ENCODE measurements at regions of chr19 and their contacts with region 1.

Region 1: DNA sequence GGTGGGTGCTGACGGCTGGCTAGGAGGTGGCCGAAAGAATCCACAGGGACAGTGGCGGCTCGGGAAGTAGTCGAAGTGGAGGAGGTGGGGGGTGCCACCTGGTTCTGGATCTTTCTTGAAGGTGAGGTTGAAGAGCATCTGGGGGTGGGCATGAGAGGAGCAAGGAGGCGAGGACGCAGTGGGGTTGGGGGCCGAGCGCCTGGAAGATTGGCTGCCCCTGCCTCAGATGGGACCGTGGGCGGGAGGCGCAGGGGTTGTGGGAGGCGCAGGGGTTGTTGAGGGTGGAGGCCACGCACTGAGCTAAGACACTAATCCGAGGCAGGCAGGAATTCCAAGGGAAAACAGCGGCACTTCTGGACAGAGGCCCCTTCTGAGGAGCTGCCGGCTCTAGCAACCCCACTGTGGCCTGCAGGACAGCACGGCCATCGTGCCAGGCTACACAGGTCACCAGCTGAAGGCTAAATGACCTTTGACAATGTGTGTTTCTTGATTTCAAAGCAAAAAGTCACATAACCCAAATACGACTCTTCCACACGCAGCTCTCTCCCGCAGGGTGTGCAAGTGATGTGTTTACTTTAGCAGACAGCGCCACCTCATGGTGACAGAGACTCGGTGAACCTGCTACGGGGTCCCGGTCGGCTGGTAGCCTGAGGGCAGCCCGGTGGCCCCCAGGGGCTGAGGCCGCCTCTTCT is 44.1 kb upstream of the RANBP3 start:
- DNase-seq: peak; percentile 87
- ATAC-seq: peak; percentile 93
- H3K4me3 Mint-ChIP-seq: no peak overlapping the region
- H3K27ac Mint-ChIP-seq: no peak overlapping the region
- H3K4me1 Mint-ChIP-seq: peaks cover 14% of the 10 kb centered on the region
- H3K27me3 Mint-ChIP-seq: no peaks in the 10 kb centered on the region

Region 2: DNA sequence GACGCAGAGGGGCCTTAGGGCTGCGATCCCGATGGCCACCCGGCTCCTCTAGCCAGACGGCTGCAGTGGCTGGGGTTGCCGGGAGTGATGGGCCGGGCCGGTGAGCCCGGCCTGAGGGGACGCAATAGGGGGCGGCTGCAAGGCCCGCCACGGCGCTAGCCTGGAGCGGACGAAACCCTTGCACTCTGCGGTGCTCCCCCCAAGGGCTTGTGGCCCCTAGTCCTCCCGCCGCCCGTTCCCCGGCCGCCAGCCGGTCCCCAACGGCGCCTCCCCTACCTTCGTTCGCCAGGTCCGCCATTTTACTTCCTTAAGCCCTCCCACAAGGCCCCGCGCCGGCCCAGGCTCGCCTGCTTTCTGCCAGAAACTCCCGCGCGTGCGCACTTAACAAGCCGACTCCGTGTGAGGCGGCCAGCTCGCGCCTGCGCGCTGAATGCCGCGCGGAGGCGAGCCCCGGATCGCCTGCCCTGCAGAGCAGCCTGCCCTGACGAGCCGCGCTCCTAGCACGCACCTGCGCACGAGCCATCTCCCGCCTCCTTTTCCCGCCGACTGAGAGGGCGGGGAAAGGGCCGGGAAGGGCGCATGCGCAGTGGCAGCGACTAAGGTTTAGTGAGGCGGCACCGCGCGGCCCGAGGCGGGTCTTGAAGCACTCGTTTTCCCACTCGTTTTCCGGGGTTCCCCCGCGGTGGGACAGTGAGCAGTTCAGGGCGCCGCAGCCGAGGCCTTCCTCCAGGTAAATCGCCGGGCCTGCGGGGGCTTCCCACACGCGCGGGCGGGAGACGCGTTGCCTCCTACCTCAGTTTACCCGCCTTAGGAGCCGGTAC is 44.0 kb before region 1 on chr19 and contains the start of gene RANBP3:
- CTCF ChIA-PET with region 1: interaction called, 33 read pairs
- POLR2A ChIA-PET with region 1: no interaction called
- DNase-seq: peak; percentile 99
- ATAC-seq: peak; percentile 98
- H3K4me3 Mint-ChIP-seq: peak within 1 kb of the TSS; percentile 99
- H3K27ac Mint-ChIP-seq: peak within 1 kb of the TSS; percentile 95
- H3K4me1 Mint-ChIP-seq: peaks cover 60% of the 10 kb centered on the region
- H3K27me3 Mint-ChIP-seq: no peaks in the 10 kb centered on the region
- total RNA-seq, gene RANBP3: 82.2 to 93.6 TPM

Region 3: GRCh38 chr19:5987077-5987818 is 34.8 kb before region 1 on chr19:
- CTCF ChIA-PET with region 1: interaction called, 47 read pairs
- POLR2A ChIA-PET with region 1: no interaction called
- DNase-seq: peak; percentile 83
- ATAC-seq: peak; percentile 57
- H3K4me3 Mint-ChIP-seq: peak overlapping the region; percentile 67
- H3K27ac Mint-ChIP-seq: peak overlapping the region; percentile 66
- H3K4me1 Mint-ChIP-seq: peaks cover 48% of the 10 kb centered on the region
- H3K27me3 Mint-ChIP-seq: no peaks in the 10 kb centered on the region

Region 4: DNA sequence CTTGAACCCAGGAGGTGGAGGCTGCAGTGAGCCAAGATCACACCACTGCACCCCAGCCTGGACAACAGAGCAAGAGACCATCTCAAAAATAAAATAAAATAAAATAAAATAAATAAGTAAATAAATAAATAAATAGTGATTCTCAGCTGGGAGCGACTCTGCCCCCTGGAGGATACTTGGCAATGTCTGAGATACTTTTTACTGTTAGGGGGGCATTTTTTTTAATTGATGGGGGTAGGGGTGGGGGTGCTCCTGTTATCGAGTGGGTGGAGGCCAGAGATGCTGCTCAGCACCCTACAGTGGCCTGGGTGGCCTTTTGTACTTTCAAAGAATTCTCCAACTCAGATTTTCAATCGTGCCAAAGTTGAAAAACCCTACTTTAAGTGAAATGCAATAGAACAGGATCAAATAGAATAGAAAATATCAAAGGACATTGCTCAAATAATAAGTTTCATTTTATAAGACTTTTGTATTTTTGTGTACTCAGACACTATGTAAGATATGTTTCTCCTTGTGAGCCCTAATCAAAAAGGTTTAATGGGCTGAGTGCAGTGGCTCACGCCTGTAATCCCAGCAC is 332.2 kb after region 1 on chr19:
- CTCF ChIA-PET with region 1: no interaction called
- POLR2A ChIA-PET with region 1: no interaction called
- DNase-seq: no peak
- ATAC-seq: no peak
- H3K4me3 Mint-ChIP-seq: no peak overlapping the region
- H3K27ac Mint-ChIP-seq: no peak overlapping the region
- H3K4me1 Mint-ChIP-seq: no peaks in the 10 kb centered on the region
- H3K27me3 Mint-ChIP-seq: no peaks in the 10 kb centered on the region

Measured in activated CD8-positive, alpha-beta T cell treated with anti-CD3 and anti-CD28 coated beads, Interleukin-2, amount 10 ng/mL, durations not matched to agents 7 days and 5 days (primary cell).